ENCODE measurements at regions of chr13 and their contacts with region 1.

Region 1: DNA sequence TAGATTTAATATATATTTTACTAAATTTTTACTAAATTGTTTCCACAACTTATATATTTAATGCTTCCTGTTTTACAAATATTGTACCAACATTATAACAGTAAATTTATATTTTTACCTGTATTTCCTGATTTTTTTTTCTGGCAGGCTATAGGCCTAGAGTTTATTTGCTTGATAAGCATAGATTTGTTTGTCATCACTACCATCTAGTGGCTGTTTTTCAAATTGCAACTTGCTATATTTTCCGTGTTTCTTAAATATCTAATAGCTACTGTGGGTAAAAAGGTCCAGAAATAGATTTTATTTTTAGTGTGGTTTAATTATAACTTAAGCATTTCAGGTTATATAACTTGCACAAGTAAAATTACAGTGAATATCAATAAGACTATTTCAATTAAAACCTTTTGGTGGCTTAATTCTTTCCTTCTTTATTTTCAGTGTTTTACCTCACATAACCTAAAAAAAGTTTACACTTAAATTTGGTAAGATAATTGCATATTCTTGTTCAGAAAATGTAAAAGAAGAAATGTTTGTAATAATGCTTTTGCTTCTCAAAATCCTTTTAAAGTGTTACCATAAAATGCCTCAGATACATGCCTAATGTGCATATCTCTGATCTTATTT is 60.6 kb downstream of the NDFIP2 start:
- DNase-seq: no peak
- ATAC-seq: peak; percentile 45
- H3K4me3 Mint-ChIP-seq: no peak overlapping the region
- H3K27ac Mint-ChIP-seq: no peak overlapping the region
- H3K4me1 Mint-ChIP-seq: peaks cover 9% of the 10 kb centered on the region
- H3K27me3 Mint-ChIP-seq: no peaks in the 10 kb centered on the region

Region 2: GRCh38 chr13:79522583-79522982 is 19.0 kb before region 1 on chr13:
- CTCF ChIA-PET with region 1: interaction called, 10 read pairs
- DNase-seq: peak; percentile 85
- ATAC-seq: peak; percentile 87
- H3K4me3 Mint-ChIP-seq: peak overlapping the region; percentile 37
- H3K27ac Mint-ChIP-seq: peak overlapping the region; percentile 93
- H3K4me1 Mint-ChIP-seq: peaks cover 43% of the 10 kb centered on the region
- H3K27me3 Mint-ChIP-seq: no peaks in the 10 kb centered on the region